K562 (cell line): ENCODE measurements at regions of chr19 and their contacts with region 1.

Region 1: GRCh38 chr19:4831304-4831978 is at the start of gene TICAM1:
- DNase-seq: peak; percentile 78 to 90 (median 85)
- ATAC-seq: peak; percentile 93
- H3K4me3 ChIP-seq: peak within 1 kb of the TSS; percentile 98
- H3K27ac ChIP-seq: peak within 1 kb of the TSS; percentile 90
- H3K4me1 ChIP-seq: peaks cover 7 to 15% of the 10 kb centered on the region in 2 experiments; a peak in 4 of 5 replicates
- H3K27me3 ChIP-seq: no peaks in the 10 kb centered on the region
- CTCF ChIP-seq: 0 out of 6 replicates have a peak, but pooled peaks of 1 of the 3 experiments have one; percentile 10
- EP300 ChIP-seq: no peak
- POLR2A ChIP-seq: peak; percentile 81
- RAD21 ChIP-seq: no peak
- polyA plus RNA-seq, gene TICAM1: 0.07 to 0.11 TPM

Region 2: DNA sequence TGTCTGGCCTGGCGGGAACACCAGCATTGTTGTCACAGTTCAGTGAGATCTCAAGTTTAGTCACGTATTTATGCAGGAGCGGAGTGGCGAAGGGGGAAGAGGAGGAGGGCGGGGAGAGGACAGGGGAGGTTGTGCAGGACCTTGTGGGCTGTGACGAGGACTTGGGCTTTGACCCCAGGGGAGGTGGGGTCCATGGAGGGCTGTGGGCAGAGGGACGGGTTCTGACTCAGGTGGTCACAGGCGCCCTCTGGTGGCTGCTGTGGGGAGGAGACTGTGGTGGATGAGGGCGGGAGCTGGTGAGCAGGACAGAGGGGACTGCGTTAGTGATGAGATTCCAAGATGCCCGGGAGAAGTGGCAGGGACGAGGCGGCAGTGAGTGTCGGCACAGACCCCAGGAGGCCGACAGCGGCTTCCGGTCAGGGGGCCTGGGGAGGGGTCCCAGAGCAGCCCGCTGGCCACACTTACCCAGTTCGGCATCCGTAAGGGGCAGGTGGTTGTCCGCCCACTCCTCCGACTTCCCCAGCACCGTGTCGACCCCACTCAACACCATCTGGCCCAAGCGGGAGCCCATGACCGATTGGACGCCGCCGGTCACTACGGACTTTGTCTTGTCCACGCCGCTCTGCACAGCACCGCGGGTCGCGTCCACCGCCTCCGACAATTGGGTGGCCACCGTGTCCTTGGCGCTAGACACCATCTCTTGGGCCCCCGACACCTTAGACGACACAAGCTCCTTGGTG is 20.3 kb after region 1 on chr19:
- CTCF ChIA-PET with region 1: interaction called, 10 read pairs
- POLR2A ChIA-PET with region 1: interaction called, 3 read pairs
- in situ Hi-C with region 1: no loop called
- intact Hi-C with region 1: no loop called
- DNase-seq: peak; percentile 71 to 82 (median 74)
- ATAC-seq: peak; percentile 96
- H3K4me3 ChIP-seq: no peak overlapping the region
- H3K27ac ChIP-seq: no peak overlapping the region
- H3K4me1 ChIP-seq: peaks cover 0 to 10% of the 10 kb centered on the region in 2 experiments; a peak in 2 of 5 replicates
- H3K27me3 ChIP-seq: no peaks in the 10 kb centered on the region
- CTCF ChIP-seq: peak; percentile 79 to 85 (median 85)
- EP300 ChIP-seq: no peak
- POLR2A ChIP-seq: no peak
- RAD21 ChIP-seq: peak; percentile 32 to 65

Region 3: DNA sequence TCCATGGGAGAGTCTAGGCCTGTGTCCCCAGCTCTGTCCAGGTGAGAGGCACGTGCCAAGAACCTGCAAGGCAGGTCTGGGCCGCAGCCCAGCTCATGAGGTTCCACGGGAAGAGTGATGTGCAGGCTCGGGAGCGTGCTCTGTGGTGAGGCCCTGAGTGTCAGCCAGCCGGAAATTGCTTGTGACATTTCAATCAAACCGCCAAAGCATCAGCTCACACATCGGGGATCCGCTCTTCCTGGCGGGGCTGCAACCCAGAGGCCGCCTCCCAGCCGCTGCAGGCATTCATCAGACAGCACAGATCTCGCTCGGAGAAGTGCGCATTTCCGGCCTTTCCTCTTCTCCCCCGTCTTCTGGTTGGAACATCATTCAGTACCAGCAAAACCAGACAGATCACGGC is 246.7 kb after region 1 on chr19:
- CTCF ChIA-PET with region 1: no interaction called
- POLR2A ChIA-PET with region 1: no interaction called
- in situ Hi-C with region 1: no loop called
- intact Hi-C with region 1: no loop called
- DNase-seq: no peak
- ATAC-seq: no peak
- H3K4me3 ChIP-seq: no peak overlapping the region
- H3K27ac ChIP-seq: no peak overlapping the region
- H3K4me1 ChIP-seq: peaks cover 0 to 43% of the 10 kb centered on the region in 2 experiments; a peak in 3 of 5 replicates
- H3K27me3 ChIP-seq: no peaks in the 10 kb centered on the region
- CTCF ChIP-seq: no peak
- EP300 ChIP-seq: no peak
- POLR2A ChIP-seq: no peak
- RAD21 ChIP-seq: no peak